ENCODE measurements at regions of chr9 and their contacts with region 1.

Region 1: GRCh38 chr9:33404788-33405362 is 2.5 kb upstream of the AQP7 start:
- DNase-seq: no peak
- ATAC-seq: peak in 1 of 4 donors; percentile 11
- H3K4me3 ChIP-seq: no peak overlapping the region
- H3K27ac ChIP-seq: no peak overlapping the region
- H3K4me1 ChIP-seq: peaks cover 0 to 3% (median 0%) of the 10 kb centered on the region in 4 donors
- H3K27me3 ChIP-seq: no peaks in the 10 kb centered on the region
- CTCF ChIP-seq: no peak
- POLR2A ChIP-seq: no peak

Region 2: GRCh38 chr9:33092634-33093033 is 312.2 kb before region 1 on chr9:
- intact Hi-C with region 1: no loop called
- DNase-seq: no peak
- ATAC-seq: no peak
- H3K4me3 ChIP-seq: no peak overlapping the region
- H3K27ac ChIP-seq: no peak overlapping the region
- H3K4me1 ChIP-seq: no peaks in the 10 kb centered on the region
- H3K27me3 ChIP-seq: no peaks in the 10 kb centered on the region
- CTCF ChIP-seq: no peak
- POLR2A ChIP-seq: no peak

Region 3: DNA sequence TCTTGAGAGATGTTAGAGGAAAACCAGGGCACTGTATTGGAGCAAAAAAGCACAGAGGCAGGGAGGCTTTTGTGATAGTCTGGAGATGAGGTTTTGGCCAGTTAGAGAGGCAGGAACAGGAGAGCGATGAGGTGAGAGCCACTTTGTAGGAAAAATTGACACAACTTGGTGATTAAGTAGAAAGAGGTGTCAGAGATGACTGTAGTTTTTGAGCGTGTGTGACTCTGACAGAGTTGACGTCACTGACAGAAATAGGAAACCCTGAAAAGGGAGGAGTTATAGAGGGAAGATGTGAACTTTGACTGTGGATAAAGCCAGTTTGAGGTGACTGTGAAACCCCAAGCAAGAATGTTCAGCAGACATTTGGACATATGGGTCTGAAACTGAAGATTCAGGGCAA is 98.8 kb before region 1 on chr9:
- intact Hi-C with region 1: no loop called
- DNase-seq: no peak
- ATAC-seq: peak; percentile 30 to 77 (median 60)
- H3K4me3 ChIP-seq: no peak overlapping the region
- H3K27ac ChIP-seq: peak overlapping the region in 1 of 3 donors; percentile 35
- H3K4me1 ChIP-seq: no peaks in the 10 kb centered on the region
- H3K27me3 ChIP-seq: no peaks in the 10 kb centered on the region
- CTCF ChIP-seq: no peak
- POLR2A ChIP-seq: no peak

Region 4: DNA sequence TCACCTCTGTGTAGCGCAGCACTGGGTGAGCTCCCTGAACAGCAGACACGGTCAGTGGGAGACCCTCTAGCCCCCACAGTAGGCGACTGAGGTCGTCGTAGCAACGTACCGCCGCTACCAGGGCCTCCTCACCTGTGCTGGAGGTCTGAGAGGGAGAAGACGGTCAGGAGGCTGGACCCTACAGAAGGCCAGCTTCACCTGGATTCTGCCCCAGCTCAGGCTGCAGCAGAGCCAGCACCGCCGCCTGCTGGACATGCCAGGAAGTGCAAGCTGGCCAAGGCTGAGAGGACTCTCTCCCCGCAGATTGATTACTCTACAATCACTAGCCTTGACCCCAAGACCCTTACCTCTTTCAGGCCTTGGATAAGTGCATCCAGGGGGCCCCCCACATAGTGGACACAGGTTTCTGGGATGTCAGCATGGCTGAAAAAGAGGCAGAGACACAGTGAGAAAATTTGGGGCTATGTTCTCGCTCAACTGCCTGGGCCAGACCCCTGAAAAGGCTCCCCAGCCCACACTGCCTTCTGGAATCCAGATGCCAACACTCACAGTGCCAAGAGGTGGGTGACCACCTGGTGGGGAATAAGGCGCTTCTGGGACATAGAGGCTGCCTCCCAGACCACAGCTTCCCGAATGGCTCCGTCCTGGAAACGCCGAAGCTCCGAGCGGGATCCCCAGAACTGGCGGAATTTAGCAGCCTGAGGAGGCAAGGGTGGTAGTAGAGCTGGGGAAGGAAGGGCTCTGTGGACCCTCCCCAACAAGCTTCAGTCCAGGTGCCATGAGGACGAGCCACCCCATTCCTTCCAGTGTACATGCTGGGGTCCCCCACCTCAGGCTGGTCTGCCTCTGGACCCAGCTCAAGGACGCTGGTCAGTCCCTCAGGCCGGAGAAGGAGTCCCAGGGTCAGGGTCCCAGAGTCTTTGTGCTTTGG is 62.0 kb after region 1 on chr9:
- intact Hi-C with region 1: loop called in 1 of 2 experiments (anchors 5 kb)
- DNase-seq: peak; percentile 71 to 74 (median 72)
- ATAC-seq: peak; percentile 78 to 91 (median 87)
- H3K4me3 ChIP-seq: no peak overlapping the region
- H3K27ac ChIP-seq: no peak overlapping the region
- H3K4me1 ChIP-seq: no peaks in the 10 kb centered on the region
- H3K27me3 ChIP-seq: no peaks in the 10 kb centered on the region
- CTCF ChIP-seq: peak; percentile 93 to 96 (median 95)
- POLR2A ChIP-seq: no peak

Measured in right lobe of liver (tissue), 6 donors.